Mammary epithelial cell (primary cell): ENCODE measurements at regions of chr1 and their contacts with region 1.

Region 1: GRCh38 chr1:61337981-61338848 is 255.9 kb downstream of the NFIA start:
- DNase-seq: peak; percentile 94
- H3K4me3 ChIP-seq: peak overlapping the region; percentile 27 to 49 (median 45)
- H3K27ac ChIP-seq: peak overlapping the region; percentile 95
- H3K4me1 ChIP-seq: peaks cover 24% of the 10 kb centered on the region
- H3K27me3 ChIP-seq: no peaks in the 10 kb centered on the region
- CTCF ChIP-seq: peak; percentile 86 to 91

Region 2: GRCh38 chr1:60969971-60970509 is 368.2 kb before region 1 on chr1:
- CTCF ChIA-PET with region 1: no interaction called
- dilution Hi-C with region 1: no loop called
- in situ Hi-C with region 1: no loop called
- intact Hi-C with region 1: loop called (anchors 1 kb)
- DNase-seq: peak; percentile 46
- H3K4me3 ChIP-seq: no peak overlapping the region
- H3K27ac ChIP-seq: no peak overlapping the region
- H3K4me1 ChIP-seq: peaks cover 33% of the 10 kb centered on the region
- H3K27me3 ChIP-seq: no peaks in the 10 kb centered on the region
- CTCF ChIP-seq: peak; percentile 47 to 52

Region 3: GRCh38 chr1:61077676-61078541 is 260.3 kb before region 1 on chr1:
- CTCF ChIA-PET with region 1: no interaction called
- dilution Hi-C with region 1: no loop called
- in situ Hi-C with region 1: loop called in 1 of 2 experiments (anchors 10 kb)
- intact Hi-C with region 1: loop called (anchors 1 kb)
- DNase-seq: peak; percentile 100
- H3K4me3 ChIP-seq: peak overlapping the region; percentile 63 to 92 (median 81)
- H3K27ac ChIP-seq: peak overlapping the region; percentile 64
- H3K4me1 ChIP-seq: peaks cover 33% of the 10 kb centered on the region
- H3K27me3 ChIP-seq: no peaks in the 10 kb centered on the region
- CTCF ChIP-seq: no peak

Region 4: GRCh38 chr1:61253059-61253735 is 85.0 kb before region 1 on chr1:
- CTCF ChIA-PET with region 1: no interaction called
- dilution Hi-C with region 1: no loop called
- in situ Hi-C with region 1: no loop called
- intact Hi-C with region 1: loop called (anchors 1 kb)
- DNase-seq: peak; percentile 70
- H3K4me3 ChIP-seq: no peak overlapping the region
- H3K27ac ChIP-seq: peak overlapping the region; percentile 63
- H3K4me1 ChIP-seq: peaks cover 30% of the 10 kb centered on the region
- H3K27me3 ChIP-seq: no peaks in the 10 kb centered on the region
- CTCF ChIP-seq: no peak

Region 5: DNA sequence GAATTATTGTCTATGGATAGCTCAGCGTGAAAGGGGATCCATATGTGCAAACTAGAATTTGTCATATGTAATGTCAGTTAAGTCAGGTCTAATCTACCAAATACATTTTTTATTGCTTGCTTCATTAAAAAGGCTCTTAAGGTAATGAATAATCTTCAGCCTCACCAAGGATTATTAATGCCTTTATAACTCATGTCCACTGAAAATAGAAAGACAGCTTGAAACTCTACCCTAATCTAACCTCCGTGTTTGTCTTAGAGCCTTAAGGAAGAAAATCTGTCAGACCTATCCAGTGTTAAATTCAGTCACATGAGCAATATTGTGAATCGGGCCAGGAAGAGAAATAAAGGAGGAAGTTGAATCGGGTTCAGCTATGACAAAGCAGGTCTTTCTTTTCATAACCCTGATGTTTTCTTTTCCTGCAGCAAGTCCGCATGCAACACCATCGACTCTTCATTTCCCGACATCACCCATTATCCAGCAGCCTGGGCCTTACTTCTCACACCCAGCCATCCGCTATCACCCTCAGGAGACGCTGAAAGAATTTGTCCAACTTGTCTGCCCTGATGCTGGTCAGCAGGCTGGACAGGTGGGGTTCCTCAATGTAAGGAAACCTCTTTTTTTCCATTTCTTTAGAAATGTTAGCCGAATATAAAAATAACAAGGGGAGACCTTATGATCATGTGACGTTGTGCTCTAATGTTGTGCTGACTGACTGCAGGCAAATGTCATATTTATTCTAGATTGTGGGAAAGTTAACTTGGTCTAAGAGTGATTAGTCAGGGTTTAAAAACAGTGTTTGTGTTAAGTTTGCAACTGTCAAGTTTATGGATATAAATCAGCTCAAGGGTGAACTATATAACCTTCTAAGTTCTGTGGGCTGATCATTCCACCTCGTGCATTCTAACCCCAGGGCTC is 65.7 kb after region 1 on chr1:
- CTCF ChIA-PET with region 1: no interaction called
- dilution Hi-C with region 1: no loop called
- in situ Hi-C with region 1: no loop called
- intact Hi-C with region 1: no loop called
- DNase-seq: no peak
- H3K4me3 ChIP-seq: no peak overlapping the region
- H3K27ac ChIP-seq: no peak overlapping the region
- H3K4me1 ChIP-seq: no peaks in the 10 kb centered on the region
- H3K27me3 ChIP-seq: no peaks in the 10 kb centered on the region
- CTCF ChIP-seq: no peak

Region 6: GRCh38 chr1:61453111-61453961 is 115.1 kb after region 1 on chr1:
- CTCF ChIA-PET with region 1: no interaction called
- dilution Hi-C with region 1: no loop called
- in situ Hi-C with region 1: no loop called
- intact Hi-C with region 1: loop called (anchors 1 kb)
- DNase-seq: peak; percentile 88
- H3K4me3 ChIP-seq: no peak overlapping the region
- H3K27ac ChIP-seq: peak overlapping the region; percentile 70
- H3K4me1 ChIP-seq: peaks cover 22% of the 10 kb centered on the region
- H3K27me3 ChIP-seq: no peaks in the 10 kb centered on the region
- CTCF ChIP-seq: peak; percentile 88 to 91